CD4-positive, alpha-beta T cell (primary cell): ENCODE measurements at regions of chr10 and their contacts with region 1.

Region 1: GRCh38 chr10:102503281-102504220 is at the start of gene SUFU:
- DNase-seq: peak; percentile 94 to 100 (median 98)
- ATAC-seq: peak; percentile 67
- H3K4me3 ChIP-seq: peak within 1 kb of the TSS; percentile 100
- H3K4me3 Mint-ChIP-seq: no peak within 1 kb of the TSS
- H3K27ac ChIP-seq: peak within 1 kb of the TSS; percentile 80 to 97
- H3K27ac Mint-ChIP-seq: no peak within 1 kb of the TSS
- H3K4me1 ChIP-seq: peaks cover 44% of the 10 kb centered on the region
- H3K4me1 Mint-ChIP-seq: peaks cover 46% of the 10 kb centered on the region
- H3K27me3 ChIP-seq: no peaks in the 10 kb centered on the region
- H3K27me3 Mint-ChIP-seq: no peaks in the 10 kb centered on the region
- CTCF ChIP-seq: peak; percentile 88
- total RNA-seq, gene SUFU: 6.7 to 7.3 TPM

Region 2: GRCh38 chr10:102132563-102133372 is 370.8 kb before region 1 on chr10 and contains the start of gene PPRC1:
- CTCF ChIA-PET with region 1: no interaction called
- POLR2A ChIA-PET with region 1: no interaction called
- intact Hi-C with region 1: loop called in 1 of 2 experiments (anchors 5 kb)
- DNase-seq: peak; percentile 93 to 99 (median 95)
- ATAC-seq: peak; percentile 94
- H3K4me3 ChIP-seq: peak within 1 kb of the TSS; percentile 98
- H3K4me3 Mint-ChIP-seq: peak within 1 kb of the TSS; percentile 98
- H3K27ac ChIP-seq: peak within 1 kb of the TSS; percentile 81 to 82
- H3K27ac Mint-ChIP-seq: peak within 1 kb of the TSS; percentile 87
- H3K4me1 ChIP-seq: peaks cover 40% of the 10 kb centered on the region
- H3K4me1 Mint-ChIP-seq: peaks cover 39% of the 10 kb centered on the region
- H3K27me3 ChIP-seq: no peaks in the 10 kb centered on the region
- H3K27me3 Mint-ChIP-seq: no peaks in the 10 kb centered on the region
- CTCF ChIP-seq: peak; percentile 96
- total RNA-seq, gene PPRC1: 22.0 to 22.9 TPM

Region 3: GRCh38 chr10:102394079-102394800 is 109.3 kb before region 1 on chr10:
- CTCF ChIA-PET with region 1: interaction called, 5 read pairs
- POLR2A ChIA-PET with region 1: interaction called, 25 read pairs
- intact Hi-C with region 1: loop called in 1 of 2 experiments (anchors 1 kb)
- DNase-seq: peak; percentile 95 to 99 (median 98)
- ATAC-seq: peak; percentile 72
- H3K4me3 ChIP-seq: peak overlapping the region; percentile 64
- H3K4me3 Mint-ChIP-seq: peak overlapping the region; percentile 92
- H3K27ac ChIP-seq: peak overlapping the region; percentile 97 to 100
- H3K27ac Mint-ChIP-seq: peak overlapping the region; percentile 100
- H3K4me1 ChIP-seq: peaks cover 57% of the 10 kb centered on the region
- H3K4me1 Mint-ChIP-seq: peaks cover 47% of the 10 kb centered on the region
- H3K27me3 ChIP-seq: no peaks in the 10 kb centered on the region
- H3K27me3 Mint-ChIP-seq: no peaks in the 10 kb centered on the region
- CTCF ChIP-seq: peak; percentile 12

Region 4: DNA sequence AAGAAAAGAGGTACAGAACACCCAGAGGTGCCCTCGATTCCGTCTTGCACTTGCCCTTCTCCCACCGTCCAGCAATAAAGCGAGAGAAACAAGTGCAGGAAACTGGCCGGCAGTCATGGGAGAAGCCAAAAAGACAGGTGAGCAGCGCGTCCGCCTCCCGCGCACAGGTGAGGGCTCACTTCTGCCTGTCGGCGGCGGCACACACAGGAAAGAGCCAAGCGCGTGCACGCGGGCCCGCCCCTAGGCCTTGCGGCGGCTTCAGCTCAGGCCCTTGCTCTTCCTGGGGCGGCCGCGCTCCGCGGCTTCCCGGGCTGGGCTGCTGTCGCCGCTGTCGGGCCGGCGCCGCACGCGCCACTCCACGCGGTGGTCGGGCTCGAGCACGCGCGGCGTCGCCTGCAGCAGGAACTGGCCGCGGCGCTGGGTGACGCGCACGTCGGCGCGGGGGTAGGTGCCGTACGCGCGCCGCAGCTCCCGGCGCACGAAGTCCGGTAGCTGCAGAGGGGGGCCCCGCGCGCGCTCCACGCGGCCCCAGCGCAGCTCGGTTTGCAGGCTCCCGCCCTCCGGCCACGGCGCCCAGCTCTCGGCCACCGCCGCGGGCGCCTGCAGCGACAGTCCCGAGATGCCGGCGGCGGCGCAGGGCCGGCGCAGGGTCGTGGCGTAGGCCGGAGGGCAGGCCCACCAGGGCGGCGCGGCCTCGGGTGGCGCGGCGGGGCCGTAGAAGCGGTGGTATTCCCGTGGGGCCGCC is 53.2 kb before region 1 on chr10:
- CTCF ChIA-PET with region 1: no interaction called
- POLR2A ChIA-PET with region 1: interaction called, 28 read pairs
- intact Hi-C with region 1: loop called in 1 of 2 experiments (anchors 5 kb)
- DNase-seq: peak; percentile 78 to 98 (median 88)
- ATAC-seq: peak; percentile 77
- H3K4me3 ChIP-seq: peak overlapping the region; percentile 83
- H3K4me3 Mint-ChIP-seq: peak overlapping the region; percentile 94
- H3K27ac ChIP-seq: peak overlapping the region; percentile 79 to 80
- H3K27ac Mint-ChIP-seq: peak overlapping the region; percentile 78
- H3K4me1 ChIP-seq: peaks cover 41% of the 10 kb centered on the region
- H3K4me1 Mint-ChIP-seq: peaks cover 21% of the 10 kb centered on the region
- H3K27me3 ChIP-seq: no peaks in the 10 kb centered on the region
- H3K27me3 Mint-ChIP-seq: no peaks in the 10 kb centered on the region
- CTCF ChIP-seq: no peak

Region 5: GRCh38 chr10:102641880-102642735 is 138.6 kb after region 1 on chr10:
- CTCF ChIA-PET with region 1: interaction called, 4 read pairs
- POLR2A ChIA-PET with region 1: interaction called, 23 read pairs
- intact Hi-C with region 1: loop called (anchors 2 kb)
- DNase-seq: peak; percentile 94 to 100 (median 98)
- ATAC-seq: peak; percentile 70
- H3K4me3 ChIP-seq: peak overlapping the region; percentile 75
- H3K4me3 Mint-ChIP-seq: peak overlapping the region; percentile 96
- H3K27ac ChIP-seq: peak overlapping the region; percentile 95 to 96
- H3K27ac Mint-ChIP-seq: peak overlapping the region; percentile 95
- H3K4me1 ChIP-seq: peaks cover 28% of the 10 kb centered on the region
- H3K4me1 Mint-ChIP-seq: peaks cover 31% of the 10 kb centered on the region
- H3K27me3 ChIP-seq: no peaks in the 10 kb centered on the region
- H3K27me3 Mint-ChIP-seq: no peaks in the 10 kb centered on the region
- CTCF ChIP-seq: no peak

Region 6: GRCh38 chr10:102743588-102744373 is 240.2 kb after region 1 on chr10 and contains the start of gene WBP1L:
- CTCF ChIA-PET with region 1: no interaction called
- POLR2A ChIA-PET with region 1: interaction called, 3 read pairs
- intact Hi-C with region 1: loop called in 1 of 2 experiments (anchors 2 kb)
- DNase-seq: peak; percentile 88 to 99 (median 94)
- ATAC-seq: peak; percentile 97
- H3K4me3 ChIP-seq: peak within 1 kb of the TSS; percentile 99
- H3K4me3 Mint-ChIP-seq: peak within 1 kb of the TSS; percentile 94
- H3K27ac ChIP-seq: peak within 1 kb of the TSS; percentile 73 to 78
- H3K27ac Mint-ChIP-seq: peak within 1 kb of the TSS; percentile 86
- H3K4me1 ChIP-seq: peaks cover 27% of the 10 kb centered on the region
- H3K4me1 Mint-ChIP-seq: peaks cover 51% of the 10 kb centered on the region
- H3K27me3 ChIP-seq: no peaks in the 10 kb centered on the region
- H3K27me3 Mint-ChIP-seq: no peaks in the 10 kb centered on the region
- CTCF ChIP-seq: no peak
- total RNA-seq, gene WBP1L: 6.1 to 6.5 TPM

Region 7: GRCh38 chr10:103192451-103193106 is 689.0 kb after region 1 on chr10:
- CTCF ChIA-PET with region 1: no interaction called
- POLR2A ChIA-PET with region 1: no interaction called
- intact Hi-C with region 1: loop called in 1 of 2 experiments (anchors 5 kb)
- DNase-seq: peak; percentile 24 to 78 (median 40)
- ATAC-seq: peak; percentile 68
- H3K4me3 ChIP-seq: peak overlapping the region; percentile 79
- H3K4me3 Mint-ChIP-seq: peak overlapping the region; percentile 99
- H3K27ac ChIP-seq: peak overlapping the region; percentile 75 to 78
- H3K27ac Mint-ChIP-seq: peak overlapping the region; percentile 86
- H3K4me1 ChIP-seq: peaks cover 20% of the 10 kb centered on the region
- H3K4me1 Mint-ChIP-seq: peaks cover 49% of the 10 kb centered on the region
- H3K27me3 ChIP-seq: no peaks in the 10 kb centered on the region
- H3K27me3 Mint-ChIP-seq: no peaks in the 10 kb centered on the region
- CTCF ChIP-seq: no peak